Activated CD8-positive, alpha-beta T cell treated with anti-CD3 and anti-CD28 coated beads for 36 hours (primary cell): ENCODE measurements at regions of chr5 and their contacts with region 1.

Region 1: DNA sequence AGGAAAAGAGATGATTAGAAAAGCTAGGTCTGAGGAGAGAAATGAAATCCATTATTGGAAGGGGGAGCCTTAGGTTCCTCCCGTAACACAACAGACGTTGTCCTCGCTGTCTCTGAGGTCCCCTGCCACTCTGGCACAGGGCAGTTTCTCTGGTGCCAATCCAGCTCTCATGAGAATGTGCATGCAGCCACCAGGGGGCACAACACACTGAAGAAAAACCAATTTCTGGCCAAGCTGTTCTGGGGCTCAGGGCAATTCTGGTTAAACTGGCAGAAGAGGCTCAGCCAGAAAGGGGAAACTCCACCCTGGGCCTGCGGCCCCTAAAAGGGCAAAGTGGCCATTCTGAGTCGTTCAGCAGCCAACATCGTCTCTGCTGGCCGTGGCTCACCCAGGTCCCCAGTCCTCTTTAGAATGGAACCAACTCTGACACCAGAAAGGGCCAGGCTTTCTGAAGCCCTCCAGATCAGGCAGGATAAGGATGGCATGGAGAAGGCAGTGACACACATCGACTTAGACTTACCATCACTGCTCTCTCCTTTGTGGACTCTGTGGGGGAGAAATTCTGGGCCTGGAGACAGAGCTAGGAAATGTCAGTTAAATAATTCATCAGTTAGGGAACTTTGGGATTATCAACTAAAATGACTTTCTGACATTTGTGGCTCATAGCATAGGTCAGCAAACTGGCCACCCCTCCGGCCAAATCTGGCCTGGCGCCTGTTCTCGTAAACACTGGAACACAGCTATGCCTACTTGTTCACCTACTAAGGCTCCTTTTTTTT is 58.5 kb upstream of the GOLPH3 start:
- DNase-seq: peak; percentile 88
- ATAC-seq: peak; percentile 94
- H3K4me3 Mint-ChIP-seq: no peak overlapping the region
- H3K27ac Mint-ChIP-seq: peak overlapping the region; percentile 4
- H3K4me1 Mint-ChIP-seq: peaks cover 12% of the 10 kb centered on the region
- H3K27me3 Mint-ChIP-seq: no peaks in the 10 kb centered on the region
- CTCF ChIP-seq: peak; percentile 80

Region 2: GRCh38 chr5:32261198-32261597 is 28.6 kb after region 1 on chr5:
- CTCF ChIA-PET with region 1: interaction called, 16 read pairs
- POLR2A ChIA-PET with region 1: no interaction called
- intact Hi-C with region 1: no loop called
- DNase-seq: peak; percentile 37
- ATAC-seq: peak; percentile 95
- H3K4me3 Mint-ChIP-seq: no peak overlapping the region
- H3K27ac Mint-ChIP-seq: peak overlapping the region; percentile 70
- H3K4me1 Mint-ChIP-seq: peaks cover 10% of the 10 kb centered on the region
- H3K27me3 Mint-ChIP-seq: no peaks in the 10 kb centered on the region
- CTCF ChIP-seq: no peak

Region 3: DNA sequence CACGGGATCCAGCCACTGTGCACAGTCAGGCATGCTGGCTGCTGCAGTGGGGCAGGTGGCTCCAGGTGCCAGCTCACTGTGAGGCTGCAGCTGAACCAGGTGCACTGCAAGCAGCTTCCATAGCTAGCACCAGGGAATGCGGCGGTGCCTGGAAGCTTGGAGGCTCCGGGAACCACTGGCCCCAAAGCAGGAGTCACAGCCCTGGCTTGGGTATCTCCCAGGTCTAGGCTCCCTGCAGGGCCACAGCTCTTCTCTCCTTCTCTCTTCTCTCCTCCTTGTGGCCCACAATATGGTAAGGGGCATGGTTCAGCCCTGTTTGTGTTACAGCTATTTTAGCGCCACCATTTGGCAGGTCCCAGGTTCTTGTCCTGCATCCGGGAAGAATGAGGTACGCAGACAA is 86.8 kb after region 1 on chr5:
- CTCF ChIA-PET with region 1: interaction called, 164 read pairs
- POLR2A ChIA-PET with region 1: no interaction called
- intact Hi-C with region 1: no loop called
- DNase-seq: no peak
- ATAC-seq: no peak
- H3K4me3 Mint-ChIP-seq: no peak overlapping the region
- H3K27ac Mint-ChIP-seq: no peak overlapping the region
- H3K4me1 Mint-ChIP-seq: peaks cover 4% of the 10 kb centered on the region
- H3K27me3 Mint-ChIP-seq: no peaks in the 10 kb centered on the region
- CTCF ChIP-seq: no peak

Region 4: DNA sequence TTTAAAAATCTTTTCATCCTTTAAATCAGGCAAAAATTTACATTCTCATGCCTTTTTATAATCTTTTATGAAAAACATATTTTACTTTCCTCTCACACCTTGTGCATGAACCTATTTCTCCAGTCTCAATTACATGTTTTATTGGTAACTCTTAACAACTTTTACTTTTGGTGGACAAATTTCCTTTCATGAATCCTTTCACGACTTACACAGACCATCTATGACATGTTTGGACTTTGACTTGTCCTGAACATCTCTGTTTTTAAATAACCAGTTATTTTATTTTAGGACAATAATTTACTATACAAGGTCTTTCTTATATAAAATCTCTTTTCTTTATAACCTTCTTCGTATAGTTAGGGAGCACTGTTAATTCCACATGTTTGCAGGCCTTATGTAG is 106.6 kb after region 1 on chr5:
- CTCF ChIA-PET with region 1: interaction called, 11 read pairs
- POLR2A ChIA-PET with region 1: no interaction called
- intact Hi-C with region 1: no loop called
- DNase-seq: no peak
- ATAC-seq: no peak
- H3K4me3 Mint-ChIP-seq: no peak overlapping the region
- H3K27ac Mint-ChIP-seq: no peak overlapping the region
- H3K4me1 Mint-ChIP-seq: no peaks in the 10 kb centered on the region
- H3K27me3 Mint-ChIP-seq: no peaks in the 10 kb centered on the region
- CTCF ChIP-seq: no peak